Left ventricle myocardium inferior (tissue), 1 donor: ENCODE measurements at regions of chr7 and their contacts with region 1.

Region 1: GRCh38 chr7:130896898-130897514 is 163.0 kb upstream of the KLF14 start:
- DNase-seq: peak; percentile 67
- H3K4me3 ChIP-seq: no peak overlapping the region
- H3K27ac ChIP-seq: peak overlapping the region; percentile 84
- H3K4me1 ChIP-seq: peaks cover 96% of the 10 kb centered on the region
- H3K27me3 ChIP-seq: no peaks in the 10 kb centered on the region
- CTCF ChIP-seq: peak; percentile 84

Region 2: GRCh38 chr7:130777426-130777825 is 119.6 kb before region 1 on chr7:
- intact Hi-C with region 1: no loop called
- DNase-seq: no peak
- H3K4me3 ChIP-seq: no peak overlapping the region
- H3K27ac ChIP-seq: no peak overlapping the region
- H3K4me1 ChIP-seq: no peaks in the 10 kb centered on the region
- H3K27me3 ChIP-seq: peaks cover 26% of the 10 kb centered on the region
- CTCF ChIP-seq: no peak

Region 3: GRCh38 chr7:131040467-131040932 is 143.5 kb after region 1 on chr7:
- intact Hi-C with region 1: loop called (anchors 10 kb)
- DNase-seq: no peak
- H3K4me3 ChIP-seq: peak overlapping the region; percentile 1
- H3K27ac ChIP-seq: peak overlapping the region; percentile 70
- H3K4me1 ChIP-seq: peaks cover 60% of the 10 kb centered on the region
- H3K27me3 ChIP-seq: no peaks in the 10 kb centered on the region
- CTCF ChIP-seq: peak; percentile 94

Region 4: DNA sequence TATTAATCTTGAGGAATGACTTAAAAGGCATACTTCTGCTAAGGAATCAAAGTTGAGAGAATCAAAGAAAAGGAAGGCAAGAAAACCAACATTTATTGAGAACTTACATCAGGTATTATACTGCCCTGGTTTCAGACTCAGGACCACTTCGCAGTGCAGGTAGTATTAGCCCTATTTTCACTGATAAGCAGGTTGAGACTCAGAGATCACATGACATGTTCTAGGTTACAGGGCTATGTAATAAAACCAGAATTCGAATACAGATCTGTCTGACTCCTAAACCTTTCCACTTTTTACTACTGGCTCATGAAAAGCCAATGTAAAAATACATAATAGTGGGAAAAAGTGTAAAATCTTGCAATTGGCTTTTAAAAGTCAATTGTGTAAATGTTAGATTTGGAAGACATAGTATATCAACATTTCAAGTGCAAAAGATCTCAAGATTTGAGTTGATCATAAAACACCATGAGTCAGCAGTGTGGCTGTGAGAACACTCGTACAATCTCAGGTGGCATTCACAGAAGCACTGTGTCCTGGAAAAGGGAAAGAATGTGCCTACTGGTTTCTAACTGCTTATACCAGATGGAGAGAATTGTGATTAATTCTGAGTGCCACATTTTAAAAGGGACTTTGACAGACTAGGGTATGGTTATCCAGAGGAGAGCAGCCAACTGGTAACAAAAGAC is 234.9 kb after region 1 on chr7:
- intact Hi-C with region 1: no loop called
- DNase-seq: no peak
- H3K4me3 ChIP-seq: no peak overlapping the region
- H3K27ac ChIP-seq: no peak overlapping the region
- H3K4me1 ChIP-seq: no peaks in the 10 kb centered on the region
- H3K27me3 ChIP-seq: no peaks in the 10 kb centered on the region
- CTCF ChIP-seq: no peak

Region 5: GRCh38 chr7:131145026-131145425 is 248.0 kb after region 1 on chr7:
- intact Hi-C with region 1: no loop called
- DNase-seq: no peak
- H3K4me3 ChIP-seq: no peak overlapping the region
- H3K27ac ChIP-seq: no peak overlapping the region
- H3K4me1 ChIP-seq: peaks cover 13% of the 10 kb centered on the region
- H3K27me3 ChIP-seq: no peaks in the 10 kb centered on the region
- CTCF ChIP-seq: no peak